Heart right ventricle (tissue), 16 donors: ENCODE measurements at regions of chr16 and their contacts with region 1.

Region 1: DNA sequence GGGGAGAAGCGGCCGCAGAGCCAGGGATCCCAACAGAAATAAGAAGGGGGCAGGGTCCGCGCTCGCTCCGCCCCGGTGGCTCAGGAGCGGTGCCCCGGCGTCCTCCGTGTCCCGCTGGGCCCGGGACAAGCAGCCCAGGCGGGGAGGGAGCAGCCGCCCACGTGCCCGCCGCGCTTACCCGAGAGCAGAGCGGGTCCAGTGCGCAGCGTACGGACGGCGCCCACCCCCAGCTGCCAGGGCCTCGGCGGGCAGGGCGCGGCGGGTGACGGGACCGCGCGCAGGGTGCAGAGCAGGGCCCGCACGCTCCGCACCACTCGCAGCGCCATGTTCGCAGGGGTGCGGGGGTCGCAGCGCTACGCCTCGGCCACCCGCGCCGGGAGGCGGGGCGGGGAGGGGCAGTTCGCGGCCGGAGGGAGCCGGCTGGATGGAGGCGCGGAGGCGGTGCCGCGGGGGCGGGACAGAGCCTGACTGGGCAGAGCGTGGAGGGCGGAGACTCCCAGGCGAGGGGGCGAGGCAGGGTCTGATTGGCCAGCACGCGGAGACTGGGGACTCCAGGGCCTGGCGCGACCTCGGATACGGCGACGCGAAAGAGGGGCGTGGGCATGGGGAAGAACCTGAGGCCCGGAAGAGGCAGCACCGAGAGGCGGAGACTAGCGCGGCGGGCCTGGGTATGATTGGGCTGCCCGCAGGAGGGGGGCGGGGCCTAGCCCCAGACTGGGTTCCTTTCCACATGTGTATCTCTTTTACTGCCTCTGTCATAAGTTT is at the start of gene GCSH:
- DNase-seq: peak; percentile 99 to 100
- ATAC-seq: peak; percentile 99 to 100 (median 100)
- H3K4me3 ChIP-seq: peak within 1 kb of the TSS; percentile 61 to 99 (median 92)
- H3K27ac ChIP-seq: peak within 1 kb of the TSS in 9 of 10 donors; percentile 78 to 87 (median 82)
- H3K4me1 ChIP-seq: peaks cover 0 to 12% (median 5%) of the 10 kb centered on the region in 9 donors
- H3K27me3 ChIP-seq: no peaks in the 10 kb centered on the region
- CTCF ChIP-seq: no peak
- total RNA-seq, gene GCSH: 31.2 to 53.4 (median 44.2) TPM

Region 2: DNA sequence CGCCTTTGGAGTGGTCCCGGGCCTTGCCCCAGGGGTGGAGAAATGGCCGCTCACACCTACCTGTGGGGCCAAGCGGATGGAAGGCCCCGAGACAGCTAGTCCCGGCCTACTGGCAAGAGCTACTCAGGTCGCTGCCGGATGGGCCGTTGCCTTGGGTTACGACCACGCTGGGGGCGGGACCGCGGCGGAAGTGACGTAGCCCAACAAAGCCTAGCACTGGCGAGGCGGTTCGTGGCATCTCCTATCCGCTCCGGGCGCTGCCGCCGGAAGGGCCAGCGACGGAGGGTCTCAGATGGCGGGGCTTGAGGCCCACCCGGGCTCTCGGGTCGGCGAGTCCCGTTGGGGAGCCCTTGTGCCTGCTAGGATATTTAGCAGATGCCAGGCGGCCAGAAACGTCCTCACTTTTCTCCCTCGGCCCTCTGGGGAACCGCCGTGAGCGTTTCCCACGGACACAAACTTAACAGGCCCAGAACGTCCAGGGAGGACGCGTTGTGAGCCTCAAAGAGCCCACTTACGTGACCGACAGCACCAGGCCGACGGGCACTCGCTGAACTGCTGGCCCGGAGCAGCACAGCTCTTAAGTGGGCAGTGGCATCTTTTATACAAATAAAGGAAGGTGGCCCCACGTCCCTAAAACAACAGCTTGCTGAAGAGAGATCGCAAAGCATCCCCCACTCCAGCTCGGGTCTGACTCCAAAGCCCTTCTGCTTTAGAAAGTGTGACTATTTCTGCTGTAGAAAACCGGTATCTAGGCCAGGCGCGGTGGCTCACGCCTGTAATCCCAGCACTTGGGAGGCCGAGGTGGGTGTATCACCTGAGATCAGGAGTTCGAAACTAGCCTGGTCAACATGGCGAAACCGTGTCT is 18.8 kb before region 1 on chr16 and contains the start of gene C16orf46:
- intact Hi-C with region 1: loop called in 3 of 10 experiments (anchors 1 to 2 kb)
- DNase-seq: peak; percentile 97 to 98
- ATAC-seq: peak; percentile 98 to 100 (median 99)
- H3K4me3 ChIP-seq: peak within 1 kb of the TSS; percentile 32 to 87 (median 73)
- H3K27ac ChIP-seq: peak within 1 kb of the TSS; percentile 65 to 99 (median 96)
- H3K4me1 ChIP-seq: peaks cover 0 to 13% (median 5%) of the 10 kb centered on the region in 9 donors
- H3K27me3 ChIP-seq: no peaks in the 10 kb centered on the region
- CTCF ChIP-seq: peak in 1 of 9 donors; percentile 3
- total RNA-seq, gene C16orf46: 0.19 to 2.0 (median 0.47) TPM in 8 of 10 donors, not detected in the others